ENCODE measurements at regions of chr17 and their contacts with region 1.

Region 1: DNA sequence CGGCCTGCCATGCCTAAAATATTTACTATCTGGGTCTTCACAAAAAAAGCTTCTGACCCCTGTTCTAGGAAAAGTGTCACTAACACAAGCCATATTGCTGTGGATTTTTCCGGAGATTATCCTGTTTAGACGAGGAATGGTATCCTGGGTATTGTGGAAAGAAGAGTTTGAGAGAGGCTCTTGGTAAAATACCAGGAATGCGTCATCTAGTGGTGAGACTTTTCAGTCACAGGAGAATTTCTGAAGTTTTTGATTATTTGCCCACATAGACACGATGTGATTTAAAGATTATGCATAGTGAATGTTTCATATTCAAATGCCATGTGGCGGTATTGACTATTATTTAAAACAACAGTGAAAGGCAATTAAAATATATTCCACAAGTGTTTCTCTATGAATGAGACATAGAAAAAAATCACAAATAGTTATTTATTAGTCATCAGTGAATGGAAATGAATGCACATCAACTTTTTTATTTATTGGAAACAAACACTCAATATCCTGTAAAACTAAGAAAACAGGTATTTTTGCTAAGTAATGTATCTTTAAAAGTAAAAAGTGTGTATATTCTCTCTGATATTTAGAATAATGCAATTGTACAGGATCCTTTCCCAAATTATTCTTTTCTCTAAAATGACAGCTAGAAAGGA is 7.8 kb downstream of the KRT28 start:
- DNase-seq: no peak
- CTCF ChIP-seq: peak; percentile 50

Region 2: DNA sequence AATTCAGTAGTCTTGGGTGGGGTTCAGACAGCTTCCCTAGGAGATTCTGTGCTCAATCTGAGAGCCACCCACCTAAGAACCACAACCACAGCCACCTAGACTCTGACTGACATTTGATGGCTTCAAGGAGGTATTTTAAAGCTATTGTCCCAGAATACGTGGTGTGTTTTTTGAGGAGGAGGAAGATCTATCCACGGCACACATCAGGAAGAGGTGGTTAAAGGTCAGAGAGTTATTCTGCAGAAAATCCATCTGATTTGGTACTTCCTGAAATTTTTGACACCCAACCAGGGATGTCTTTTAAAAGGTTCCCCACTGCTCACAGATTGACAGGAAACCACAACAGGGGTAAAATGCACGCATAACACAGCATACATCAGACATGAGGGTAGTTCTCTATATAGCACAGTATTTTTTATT is 169.4 kb before region 1 on chr17:
- in situ Hi-C with region 1: loop called (anchors 10 kb)
- DNase-seq: no peak
- CTCF ChIP-seq: no peak

Measured in GM13977 (cell line).